ENCODE measurements at regions of chr16 and their contacts with region 1.

Region 1: DNA sequence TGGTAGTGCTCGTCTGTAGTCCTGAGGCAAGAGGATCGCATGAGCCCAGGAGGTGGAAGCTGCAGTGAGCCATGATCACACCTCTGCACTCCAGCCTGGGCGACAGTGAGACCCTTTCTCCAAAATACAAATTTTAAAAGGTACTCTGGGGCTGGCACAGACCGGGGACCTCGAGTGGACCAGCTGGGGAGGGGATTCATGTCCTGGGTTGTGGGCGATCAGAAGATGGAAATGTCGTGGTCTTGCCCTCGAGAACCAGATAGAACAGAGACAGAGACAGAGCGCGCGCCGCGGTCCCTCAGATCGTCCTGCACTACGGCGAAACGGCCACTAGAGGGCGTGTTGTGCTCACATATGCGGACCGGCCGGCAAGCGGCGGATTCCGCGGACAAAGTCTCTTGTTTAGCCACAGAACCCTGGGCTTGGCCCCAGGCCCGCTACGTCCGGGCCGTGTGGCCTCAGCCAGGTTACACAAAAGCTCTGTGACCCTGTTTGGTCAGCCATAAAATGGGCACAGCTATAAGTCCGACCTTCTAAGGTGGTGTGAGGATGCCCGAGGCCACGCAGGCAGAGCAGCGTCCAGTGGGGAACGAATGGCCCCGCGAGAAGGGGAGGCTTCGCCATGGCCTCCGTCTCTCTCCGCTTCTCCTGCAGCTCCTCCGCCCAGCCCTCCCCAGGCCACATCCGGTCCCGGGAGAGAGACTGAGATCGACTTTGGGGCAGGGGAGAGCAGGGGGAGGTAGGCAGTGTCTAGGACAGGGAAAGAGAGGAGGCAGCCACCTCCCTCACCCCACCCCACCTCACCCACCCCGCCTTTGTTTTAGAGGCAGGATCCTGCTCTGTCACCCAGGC is 14.6 kb upstream of the SBK1 start:
- DNase-seq: peak; percentile 73 to 96
- H3K4me3 ChIP-seq: peak overlapping the region; percentile 24 to 68 (median 59); a peak in 7 of 8 replicates
- H3K27ac ChIP-seq: peak overlapping the region; percentile 34; the same call in 1 of the 2 replicates
- H3K4me1 ChIP-seq: peaks cover 0 to 11% (median 2%) of the 10 kb centered on the region in 4 experiments; a peak in 4 of 7 replicates
- H3K27me3 ChIP-seq: peaks cover 0 to 8% (median 5%) of the 10 kb centered on the region in 4 experiments; a peak in 5 of 7 replicates
- CTCF ChIP-seq: peak; percentile 95 to 96 (median 96)
- EP300 ChIP-seq: no peak
- POLR2A ChIP-seq: peak; percentile 33 to 85
- RAD21 ChIP-seq: peak; percentile 96 to 97

Region 2: GRCh38 chr16:28166394-28167208 is 111.2 kb before region 1 on chr16:
- CTCF ChIA-PET with region 1: no interaction called
- POLR2A ChIA-PET with region 1: no interaction called
- DNase-seq: no peak
- H3K4me3 ChIP-seq: no peak overlapping the region
- H3K27ac ChIP-seq: no peak overlapping the region
- H3K4me1 ChIP-seq: no peaks in the 10 kb centered on the region; a peak in 1 of 7 replicates
- H3K27me3 ChIP-seq: no peaks in the 10 kb centered on the region
- CTCF ChIP-seq: no peak
- EP300 ChIP-seq: no peak
- POLR2A ChIP-seq: no peak
- RAD21 ChIP-seq: no peak

Region 3: GRCh38 chr16:28267356-28267755 is 10.4 kb before region 1 on chr16:
- CTCF ChIA-PET with region 1: interaction called, 14 read pairs
- POLR2A ChIA-PET with region 1: interaction called, 5 read pairs
- DNase-seq: no peak
- H3K4me3 ChIP-seq: no peak overlapping the region
- H3K27ac ChIP-seq: no peak overlapping the region
- H3K4me1 ChIP-seq: peaks cover 0 to 3% (median 0%) of the 10 kb centered on the region in 4 experiments; a peak in 1 of 7 replicates
- H3K27me3 ChIP-seq: no peaks in the 10 kb centered on the region
- CTCF ChIP-seq: no peak
- EP300 ChIP-seq: no peak
- POLR2A ChIP-seq: no peak
- RAD21 ChIP-seq: no peak

Region 4: DNA sequence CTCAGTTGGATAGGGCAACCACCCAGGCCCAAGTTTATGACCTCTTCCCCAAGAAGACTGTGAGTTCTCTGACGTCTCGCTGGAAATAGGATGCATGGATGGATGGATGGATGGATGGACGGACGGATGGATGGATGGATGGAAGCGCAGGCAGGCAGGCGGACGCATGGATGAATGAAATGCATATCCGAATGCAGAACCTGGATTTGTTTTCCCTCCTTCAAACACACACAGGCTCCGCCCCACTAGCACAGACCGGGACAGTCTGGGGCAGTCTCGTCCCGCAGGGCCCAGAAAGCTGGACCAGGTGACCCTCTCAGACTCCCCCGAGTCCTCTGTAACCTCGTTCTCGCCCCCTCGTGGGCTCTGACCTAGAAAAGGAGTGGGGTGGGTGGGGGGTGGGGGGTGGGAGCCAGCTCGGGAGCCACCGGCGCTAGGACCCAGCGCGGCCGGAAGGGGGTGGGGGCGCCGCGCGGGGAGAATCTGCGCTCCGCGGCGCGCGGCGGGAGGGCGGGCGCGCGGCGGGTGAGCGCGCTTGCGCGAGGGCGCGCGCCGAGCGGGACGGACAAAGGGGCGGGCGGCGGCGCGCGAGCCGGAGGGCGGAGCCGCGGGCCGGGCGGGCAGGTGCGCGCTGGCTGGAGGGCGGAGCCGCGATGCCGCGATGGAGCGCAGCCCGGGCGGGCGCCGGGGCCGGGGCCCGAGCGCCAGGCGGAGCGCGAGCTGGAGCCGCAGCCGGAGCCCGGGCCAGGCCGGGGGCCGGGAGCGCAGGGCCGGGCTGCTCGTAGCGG is 14.3 kb after region 1 on chr16 and contains the start of gene SBK1:
- CTCF ChIA-PET with region 1: interaction called, 29 read pairs
- POLR2A ChIA-PET with region 1: interaction called, 45 read pairs
- DNase-seq: peak in 1 of 2 experiments; percentile 83
- H3K4me3 ChIP-seq: peak within 1 kb of the TSS; percentile 91 to 95 (median 94)
- H3K27ac ChIP-seq: peak within 1 kb of the TSS; percentile 77
- H3K4me1 ChIP-seq: peaks cover 3 to 16% (median 9%) of the 10 kb centered on the region in 4 experiments
- H3K27me3 ChIP-seq: no peaks in the 10 kb centered on the region
- CTCF ChIP-seq: no peak
- EP300 ChIP-seq: no peak
- POLR2A ChIP-seq: peak in 1 of 2 experiments; percentile 66; a peak in 2 of 3 replicates
- RAD21 ChIP-seq: no peak
- total RNA-seq, gene SBK1: 73.9 and 77.4 TPM in 2 replicates

Region 5: DNA sequence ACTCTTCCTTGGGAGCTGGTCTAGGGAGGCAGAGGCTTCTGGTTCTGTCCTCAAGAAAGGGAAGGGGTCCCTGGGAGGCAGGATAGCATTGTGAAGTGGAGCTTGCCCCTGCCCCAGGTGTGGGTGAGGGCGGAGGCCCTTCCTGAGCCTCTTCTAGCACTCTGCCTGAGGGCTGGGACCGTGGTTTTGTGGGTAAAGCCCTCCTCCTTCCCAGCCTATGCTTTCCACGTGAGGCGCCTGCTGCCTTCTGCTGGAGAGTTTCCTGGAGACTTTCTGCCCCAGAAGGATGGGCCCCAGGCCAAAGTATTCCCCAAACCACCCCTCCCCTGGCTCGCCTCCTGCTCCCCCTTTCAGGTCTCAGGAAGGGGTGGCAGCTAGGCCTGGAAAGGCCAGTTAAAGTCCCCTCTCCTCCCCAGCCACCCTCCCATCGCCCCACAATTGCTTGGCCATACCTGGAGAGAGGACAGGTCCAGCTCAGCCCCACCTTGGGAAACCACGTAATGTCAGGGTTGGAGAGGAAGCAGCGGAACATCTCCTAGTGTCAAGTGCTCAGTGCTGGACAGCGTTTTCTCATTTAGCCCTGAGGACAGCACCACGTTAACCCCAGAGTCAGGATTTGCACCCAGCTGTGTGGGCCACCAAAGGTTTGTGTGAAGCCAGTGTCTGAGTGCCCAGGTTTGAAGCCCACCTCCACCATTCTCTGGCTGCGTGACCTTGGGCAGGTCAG is 20.2 kb after region 1 on chr16:
- CTCF ChIA-PET with region 1: interaction called, 29 read pairs
- POLR2A ChIA-PET with region 1: interaction called, 45 read pairs
- DNase-seq: no peak
- H3K4me3 ChIP-seq: 0 out of 8 replicates have a peak overlapping the region, but pooled peaks of 1 of the 4 experiments have one; percentile 3
- H3K27ac ChIP-seq: no peak overlapping the region
- H3K4me1 ChIP-seq: peaks cover 6 to 37% (median 22%) of the 10 kb centered on the region in 4 experiments
- H3K27me3 ChIP-seq: no peaks in the 10 kb centered on the region
- CTCF ChIP-seq: no peak
- EP300 ChIP-seq: no peak
- POLR2A ChIP-seq: no peak
- RAD21 ChIP-seq: no peak

Region 6: DNA sequence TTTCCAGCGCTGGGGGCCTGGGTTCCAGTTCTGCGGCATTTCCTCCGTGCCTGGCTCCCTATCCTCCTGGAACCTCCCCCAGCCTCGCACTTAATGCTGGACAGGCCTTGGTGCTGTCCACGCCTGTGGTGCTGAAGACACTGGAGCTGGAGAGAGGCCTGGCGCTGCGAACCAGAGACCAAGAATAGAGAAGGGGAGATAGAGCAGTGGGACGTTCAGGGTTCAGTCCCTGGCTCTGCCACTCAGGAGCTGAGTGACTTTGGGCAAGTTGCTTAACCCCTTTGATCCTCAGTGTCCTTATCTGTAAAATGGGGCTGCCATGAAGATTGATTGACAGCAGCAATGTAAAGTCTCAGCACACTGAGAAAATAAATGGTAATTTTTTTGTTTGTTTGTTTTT is 26.5 kb after region 1 on chr16:
- CTCF ChIA-PET with region 1: interaction called, 29 read pairs
- POLR2A ChIA-PET with region 1: interaction called, 5 read pairs
- DNase-seq: peak in 1 of 2 experiments; percentile 75
- H3K4me3 ChIP-seq: no peak overlapping the region
- H3K27ac ChIP-seq: no peak overlapping the region
- H3K4me1 ChIP-seq: peaks cover 0 to 2% (median 0%) of the 10 kb centered on the region in 4 experiments; a peak in 2 of 7 replicates
- H3K27me3 ChIP-seq: no peaks in the 10 kb centered on the region
- CTCF ChIP-seq: no peak
- EP300 ChIP-seq: no peak
- POLR2A ChIP-seq: no peak
- RAD21 ChIP-seq: no peak

Region 7: GRCh38 chr16:28309811-28310311 is 32.1 kb after region 1 on chr16:
- CTCF ChIA-PET with region 1: interaction called, 14 read pairs
- POLR2A ChIA-PET with region 1: interaction called, 5 read pairs
- DNase-seq: no peak
- H3K4me3 ChIP-seq: no peak overlapping the region
- H3K27ac ChIP-seq: no peak overlapping the region
- H3K4me1 ChIP-seq: no peaks in the 10 kb centered on the region; a peak in 1 of 7 replicates
- H3K27me3 ChIP-seq: no peaks in the 10 kb centered on the region
- CTCF ChIP-seq: no peak
- EP300 ChIP-seq: no peak
- POLR2A ChIP-seq: no peak
- RAD21 ChIP-seq: no peak

Region 8: DNA sequence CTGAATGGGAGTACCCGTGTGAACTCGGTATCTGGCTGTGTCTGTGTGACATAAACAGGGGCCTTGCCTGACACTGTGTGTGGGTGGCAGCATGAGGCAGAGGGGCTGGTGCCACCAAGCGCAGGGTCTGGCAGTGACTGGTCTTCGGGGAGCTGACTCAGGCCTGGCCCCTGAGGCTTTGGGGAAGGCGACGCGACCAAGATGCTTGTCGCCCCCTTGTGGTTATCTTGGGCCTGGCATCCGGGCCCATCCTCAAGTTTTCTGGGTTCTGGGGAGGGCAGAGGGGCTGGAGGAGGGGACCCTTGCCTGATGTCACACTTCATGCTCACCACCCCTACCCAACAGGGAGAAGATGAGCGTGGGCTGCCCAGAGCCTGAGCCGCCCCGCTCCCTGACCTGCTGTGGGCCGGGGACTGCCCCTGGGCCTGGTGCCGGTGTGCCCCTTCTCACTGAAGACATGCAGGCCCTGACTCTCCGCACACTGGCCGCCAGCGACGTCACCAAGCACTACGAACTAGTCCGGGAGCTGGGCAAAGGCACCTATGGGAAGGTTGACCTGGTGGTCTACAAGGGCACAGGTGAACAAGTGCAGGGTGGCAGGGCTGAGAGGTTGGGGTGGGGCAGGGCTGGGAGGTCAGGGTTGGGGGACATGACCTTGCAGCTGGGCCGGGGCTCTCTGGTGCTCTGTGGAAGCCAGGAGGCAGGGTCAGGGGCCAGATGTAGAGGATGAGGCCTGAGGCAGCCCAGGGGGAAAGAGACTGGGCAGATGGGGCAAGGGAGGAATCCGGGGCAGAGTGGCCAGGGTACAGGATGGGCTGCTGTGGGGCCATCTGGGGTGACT is 39.5 kb after region 1 on chr16:
- CTCF ChIA-PET with region 1: interaction called, 152 read pairs
- POLR2A ChIA-PET with region 1: interaction called, 10 read pairs
- DNase-seq: peak in 1 of 2 experiments; percentile 92
- H3K4me3 ChIP-seq: no peak overlapping the region
- H3K27ac ChIP-seq: no peak overlapping the region
- H3K4me1 ChIP-seq: no peaks in the 10 kb centered on the region
- H3K27me3 ChIP-seq: no peaks in the 10 kb centered on the region
- CTCF ChIP-seq: peak; percentile 90 to 95 (median 91)
- EP300 ChIP-seq: no peak
- POLR2A ChIP-seq: no peak
- RAD21 ChIP-seq: peak; percentile 72 to 81

Region 9: GRCh38 chr16:28487565-28487964 is 209.8 kb after region 1 on chr16:
- CTCF ChIA-PET with region 1: no interaction called
- POLR2A ChIA-PET with region 1: no interaction called
- DNase-seq: no peak
- H3K4me3 ChIP-seq: no peak overlapping the region
- H3K27ac ChIP-seq: no peak overlapping the region
- H3K4me1 ChIP-seq: no peaks in the 10 kb centered on the region
- H3K27me3 ChIP-seq: no peaks in the 10 kb centered on the region
- CTCF ChIP-seq: no peak
- EP300 ChIP-seq: no peak
- POLR2A ChIP-seq: no peak
- RAD21 ChIP-seq: no peak